Endothelial cell of umbilical vein (primary cell): ENCODE measurements at regions of chr3 and their contacts with region 1.

Region 1: GRCh38 chr3:150603153-150603979 is at the start of gene SELENOT:
- DNase-seq: peak; percentile 99
- H3K4me3 ChIP-seq: peak within 1 kb of the TSS; percentile 67 to 72 (median 72)
- H3K27ac ChIP-seq: peak within 1 kb of the TSS; percentile 81
- H3K4me1 ChIP-seq: peaks cover 31% of the 10 kb centered on the region
- H3K27me3 ChIP-seq: no peaks in the 10 kb centered on the region
- CTCF ChIP-seq: peak; percentile 14 to 30
- POLR2A ChIP-seq: peak; percentile 98
- total RNA-seq, gene SELENOT: 89.2 and 103 TPM in 2 replicates

Region 2: DNA sequence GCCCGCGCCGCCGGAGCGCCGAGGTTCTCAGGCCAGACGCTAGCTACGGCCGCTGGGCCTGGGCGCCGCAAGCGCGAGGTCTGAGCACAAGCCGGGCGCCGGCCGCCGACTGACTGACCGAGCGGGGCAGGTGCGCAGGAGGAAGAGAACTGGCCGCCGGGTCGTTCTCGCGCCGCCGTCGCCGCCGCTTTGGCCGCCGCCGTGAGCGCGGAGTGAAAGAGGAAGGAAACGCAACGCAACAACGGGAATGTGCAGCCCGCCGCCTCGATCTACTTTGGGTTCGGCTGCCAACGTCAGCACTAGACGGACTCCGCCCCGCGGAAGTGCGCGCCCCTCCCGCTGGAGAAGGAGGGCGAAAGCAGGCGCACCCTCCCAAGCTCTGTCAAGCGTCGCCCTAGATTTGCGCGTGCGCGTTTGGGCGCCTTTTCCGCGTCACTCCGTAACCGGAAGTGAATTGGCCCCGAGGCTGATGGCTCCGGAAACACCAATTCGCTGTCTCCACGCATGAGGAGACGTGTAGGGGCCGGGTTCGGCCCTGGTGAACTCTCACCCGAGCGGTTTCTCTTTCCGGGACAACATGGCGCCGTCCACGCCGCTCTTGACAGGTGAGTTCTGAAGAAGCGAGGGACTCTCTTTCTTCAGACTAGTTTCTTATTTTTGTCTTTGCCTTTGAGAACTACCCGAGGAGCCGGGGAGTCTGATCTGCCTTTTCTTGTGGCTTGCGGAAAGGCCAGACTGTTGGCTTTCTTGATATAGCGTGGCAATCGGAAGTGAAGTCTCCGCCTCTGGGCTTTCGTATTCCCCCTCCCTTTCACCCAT is 56.9 kb before region 1 on chr3 and contains the starts of genes EIF2A and SERP1:
- CTCF ChIA-PET with region 1: no interaction called
- POLR2A ChIA-PET with region 1: no interaction called
- dilution Hi-C with region 1: no loop called
- intact Hi-C with region 1: loop called (anchors 1 kb)
- DNase-seq: peak; percentile 100
- H3K4me3 ChIP-seq: peak within 1 kb of the TSS; percentile 80 to 98 (median 93)
- H3K27ac ChIP-seq: peak within 1 kb of the TSS; percentile 97
- H3K4me1 ChIP-seq: peaks cover 25% of the 10 kb centered on the region
- H3K27me3 ChIP-seq: no peaks in the 10 kb centered on the region
- CTCF ChIP-seq: no peak
- POLR2A ChIP-seq: peak; percentile 85
- total RNA-seq, gene EIF2A: 97.6 and 104 TPM in 2 replicates
- total RNA-seq, gene SERP1: 81.7 and 82.0 TPM in 2 replicates

Region 3: GRCh38 chr3:150613709-150614480 is 10.5 kb after region 1 on chr3:
- CTCF ChIA-PET with region 1: interaction called, 5 read pairs
- POLR2A ChIA-PET with region 1: interaction called, 4 read pairs
- dilution Hi-C with region 1: no loop called
- intact Hi-C with region 1: loop called (anchors 1 kb)
- DNase-seq: peak; percentile 32
- H3K4me3 ChIP-seq: peak overlapping the region in 1 of 3 experiments; percentile 16
- H3K27ac ChIP-seq: peak overlapping the region; percentile 11
- H3K4me1 ChIP-seq: peaks cover 18% of the 10 kb centered on the region
- H3K27me3 ChIP-seq: no peaks in the 10 kb centered on the region
- CTCF ChIP-seq: no peak
- POLR2A ChIP-seq: no peak

Region 4: GRCh38 chr3:150703299-150704134 is 100.2 kb after region 1 on chr3 and contains the start of gene ERICH6:
- CTCF ChIA-PET with region 1: no interaction called
- POLR2A ChIA-PET with region 1: interaction called, 6 read pairs
- dilution Hi-C with region 1: no loop called
- intact Hi-C with region 1: loop called (anchors 1 kb)
- DNase-seq: peak; percentile 90
- H3K4me3 ChIP-seq: peak within 1 kb of the TSS; percentile 43 to 78 (median 68)
- H3K27ac ChIP-seq: peak within 1 kb of the TSS; percentile 72
- H3K4me1 ChIP-seq: peaks cover 7% of the 10 kb centered on the region
- H3K27me3 ChIP-seq: no peaks in the 10 kb centered on the region
- CTCF ChIP-seq: peak in 1 of 2 donors; percentile 12
- POLR2A ChIP-seq: peak; percentile 58
- total RNA-seq, gene ERICH6: not detected in 2 replicates

Region 5: GRCh38 chr3:150925751-150926201 is 322.4 kb after region 1 on chr3:
- CTCF ChIA-PET with region 1: no interaction called
- POLR2A ChIA-PET with region 1: no interaction called
- dilution Hi-C with region 1: no loop called
- intact Hi-C with region 1: no loop called
- DNase-seq: peak; percentile 16
- H3K4me3 ChIP-seq: no peak overlapping the region
- H3K27ac ChIP-seq: no peak overlapping the region
- H3K4me1 ChIP-seq: no peaks in the 10 kb centered on the region
- H3K27me3 ChIP-seq: peaks cover 5 to 11% of the 10 kb centered on the region in 2 experiments
- CTCF ChIP-seq: peak; percentile 62 to 73
- POLR2A ChIP-seq: no peak